Right ventricle myocardium superior (tissue), 1 donor: ENCODE measurements at regions of chr16 and their contacts with region 1.

Region 1: DNA sequence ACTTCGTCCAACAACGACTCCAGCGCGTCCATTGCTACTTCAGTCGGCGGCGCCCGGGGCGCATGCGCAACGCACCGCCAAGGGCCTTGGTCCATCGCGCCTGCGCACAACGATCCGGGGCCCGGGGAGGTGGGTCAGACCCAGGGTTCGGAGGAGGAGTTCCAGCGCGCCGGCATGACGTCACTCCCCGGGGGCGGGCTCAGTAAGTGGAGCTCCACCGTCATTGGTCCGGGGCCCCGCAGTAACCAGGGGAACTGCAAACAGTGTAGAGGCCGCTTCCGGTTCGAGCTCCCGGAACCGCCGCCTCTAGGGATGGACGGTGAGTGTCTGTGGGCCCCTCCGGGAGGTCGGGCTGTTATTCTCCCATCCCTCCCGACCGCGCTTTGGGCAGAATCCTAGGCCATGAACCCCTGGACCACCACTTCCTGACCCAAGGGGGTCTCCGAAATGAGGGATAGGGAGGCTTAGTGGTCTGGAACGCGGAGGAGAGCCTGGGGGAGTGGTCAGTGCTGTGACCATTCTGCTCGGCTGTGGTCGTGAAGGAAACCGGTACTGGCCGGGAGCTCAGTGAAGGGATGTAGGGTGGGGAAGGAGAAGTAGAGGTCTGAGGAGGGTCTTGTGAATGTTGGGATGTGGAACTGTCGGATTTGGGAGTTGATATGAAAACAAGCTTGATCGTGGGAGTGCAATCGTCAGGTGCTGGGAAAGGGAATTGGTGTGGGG is at the starts of genes GTF3C1 and KATNIP:
- DNase-seq: peak; percentile 100
- ATAC-seq: peak; percentile 100
- total RNA-seq, gene GTF3C1: 45.2 TPM
- total RNA-seq, gene KATNIP: 6.3 TPM

Region 2: GRCh38 chr16:27495191-27495590 is 54.8 kb before region 1 on chr16:
- intact Hi-C with region 1: loop called (anchors 10 kb)
- DNase-seq: peak; percentile 60
- ATAC-seq: no peak